PC-9 (cell line): ENCODE measurements at regions of chr20 and their contacts with region 1.

Region 1: DNA sequence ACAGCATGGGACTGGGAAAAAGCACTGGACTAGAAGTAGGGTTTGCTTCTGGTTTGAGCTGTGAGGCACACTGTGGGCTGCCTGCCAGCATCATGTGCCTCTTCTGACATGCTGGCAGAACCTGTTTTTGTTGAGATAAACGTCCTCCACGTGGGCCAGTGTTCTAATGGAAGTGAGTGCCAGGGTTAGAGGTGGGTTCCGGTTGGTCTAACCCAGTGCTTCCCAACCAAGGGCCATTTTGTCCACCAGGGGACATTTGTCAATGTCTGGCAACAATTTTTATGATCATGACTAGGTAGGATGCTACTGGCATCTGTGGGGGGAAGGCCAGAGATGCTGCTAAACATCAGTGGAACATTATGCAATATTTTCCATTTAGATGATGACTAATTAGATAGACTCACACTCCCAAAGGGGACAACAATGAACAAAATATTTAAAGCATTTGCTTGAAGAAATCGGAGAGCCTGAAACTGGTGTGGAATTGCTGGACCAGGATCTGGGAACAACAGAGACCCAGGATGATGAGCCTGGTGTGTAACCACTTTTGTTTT is 7.8 kb upstream of the APMAP start:
- DNase-seq: peak; percentile 90 to 98
- H3K4me3 ChIP-seq: no peak overlapping the region; the same call in 1 of the 2 replicates
- H3K27ac ChIP-seq: peak overlapping the region; percentile 68
- H3K4me1 ChIP-seq: peaks cover 33% of the 10 kb centered on the region
- H3K27me3 ChIP-seq: no peaks in the 10 kb centered on the region
- CTCF ChIP-seq: peak; percentile 50

Region 2: DNA sequence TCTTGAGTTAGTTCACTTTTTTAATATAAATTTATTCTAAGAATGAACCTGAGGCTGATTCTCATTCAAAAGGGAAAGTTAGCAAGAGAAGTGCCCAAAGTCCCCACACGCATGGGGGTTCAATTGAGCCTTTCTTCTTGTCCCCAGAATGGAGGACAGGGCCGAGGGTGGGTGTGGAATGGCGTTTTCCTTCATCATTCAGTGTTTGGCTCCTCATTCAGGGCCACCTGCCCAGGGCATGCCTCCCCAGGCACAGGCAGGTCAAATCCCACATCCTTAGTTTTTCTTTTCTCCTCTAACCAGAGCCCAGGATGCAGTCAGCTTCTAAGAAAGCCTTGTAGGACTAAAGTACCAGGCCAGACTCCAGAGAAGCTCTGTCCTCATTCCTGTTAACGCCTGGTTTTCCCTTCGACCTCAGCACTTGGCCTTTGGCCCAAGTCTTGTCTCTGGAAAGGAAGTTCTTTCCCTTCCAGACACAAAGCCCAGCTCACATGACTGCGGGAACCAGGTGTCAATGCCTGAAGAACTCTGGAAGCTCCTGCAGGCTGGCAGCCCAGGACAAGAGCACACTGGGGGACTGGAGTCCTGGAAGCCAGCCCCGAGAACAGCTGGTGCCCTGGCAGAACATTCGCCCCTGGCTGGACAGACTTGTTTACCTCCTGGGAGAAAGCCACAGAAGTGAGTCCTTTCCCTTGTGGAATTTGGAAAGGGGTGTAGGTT is 39.2 kb after region 1 on chr20:
- CTCF ChIA-PET with region 1: no interaction called
- POLR2A ChIA-PET with region 1: no interaction called
- intact Hi-C with region 1: loop called (anchors 2 kb)
- DNase-seq: peak; percentile 59 to 71
- H3K4me3 ChIP-seq: no peak overlapping the region
- H3K27ac ChIP-seq: no peak overlapping the region
- H3K4me1 ChIP-seq: peaks cover 11% of the 10 kb centered on the region; the same call in 1 of the 2 replicates
- H3K27me3 ChIP-seq: no peaks in the 10 kb centered on the region
- CTCF ChIP-seq: no peak

Region 3: DNA sequence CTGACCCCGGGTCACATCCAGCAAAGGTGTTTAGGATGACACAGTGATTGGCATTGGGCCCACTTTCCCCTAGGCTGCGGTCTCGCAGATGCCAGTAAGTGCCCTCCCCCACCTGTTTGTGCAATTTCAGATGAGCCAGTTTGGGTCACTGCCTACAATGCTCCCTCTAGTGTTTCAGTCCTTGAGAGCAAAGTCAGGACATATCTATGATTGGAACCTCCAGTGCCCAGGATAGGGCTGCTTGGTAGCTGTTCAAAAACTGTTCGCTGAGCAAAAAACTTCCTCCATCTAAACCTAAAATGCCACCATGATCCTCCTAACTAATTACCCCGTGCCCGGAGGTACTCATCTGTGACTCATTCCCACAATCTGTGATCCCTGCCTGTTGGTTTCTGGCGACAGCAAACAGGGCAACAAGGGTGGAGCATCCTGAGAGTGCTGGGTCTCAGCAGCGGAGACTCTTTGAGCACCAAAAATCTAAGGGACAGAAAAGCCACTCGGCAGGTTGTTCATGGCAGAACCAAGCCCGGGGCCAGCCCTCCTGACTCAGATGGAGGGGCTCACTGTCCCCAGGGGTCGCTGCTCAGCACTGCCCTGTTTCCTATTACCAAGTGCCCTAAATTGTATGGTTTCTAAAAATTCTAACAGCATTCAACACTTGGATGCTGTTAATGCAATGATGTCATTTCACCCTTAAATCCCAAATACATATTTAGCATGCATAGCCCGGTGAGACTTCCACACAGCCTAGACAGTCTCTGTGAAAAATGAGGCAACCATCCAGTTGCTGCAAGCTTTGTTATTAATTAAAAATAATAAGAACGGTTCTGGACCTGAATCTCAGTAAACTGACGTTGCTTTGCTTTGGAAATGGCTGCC is 76.6 kb after region 1 on chr20:
- CTCF ChIA-PET with region 1: no interaction called
- POLR2A ChIA-PET with region 1: no interaction called
- intact Hi-C with region 1: loop called (anchors 1 kb)
- DNase-seq: peak; percentile 93 to 95
- H3K4me3 ChIP-seq: peak overlapping the region; percentile 54; the same call in 1 of the 2 replicates
- H3K27ac ChIP-seq: peak overlapping the region; percentile 77
- H3K4me1 ChIP-seq: peaks cover 70% of the 10 kb centered on the region
- H3K27me3 ChIP-seq: no peaks in the 10 kb centered on the region
- CTCF ChIP-seq: peak; percentile 44; the same call in 1 of the 2 replicates

Region 4: DNA sequence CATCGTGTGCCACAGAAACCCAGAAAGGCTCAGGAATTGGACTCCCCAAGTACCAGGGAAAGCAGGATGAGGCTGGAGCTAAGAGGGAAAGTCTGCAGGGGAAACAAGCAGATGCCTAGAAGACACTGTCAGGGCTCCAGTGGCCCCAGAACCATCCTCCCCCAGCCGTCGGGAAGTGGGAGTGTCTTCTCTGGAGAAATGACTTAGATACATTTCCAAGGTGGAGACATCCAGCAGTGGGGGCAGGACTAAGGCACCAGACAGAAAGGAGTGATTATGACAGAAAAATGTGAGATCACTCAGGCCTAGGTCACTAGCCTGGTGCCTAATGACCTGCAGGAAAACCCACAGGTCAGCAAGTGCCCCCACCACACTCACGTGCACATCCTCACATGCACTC is 117.6 kb after region 1 on chr20:
- CTCF ChIA-PET with region 1: no interaction called
- POLR2A ChIA-PET with region 1: interaction called, 13 read pairs
- intact Hi-C with region 1: no loop called
- DNase-seq: no peak
- H3K4me3 ChIP-seq: no peak overlapping the region
- H3K27ac ChIP-seq: no peak overlapping the region
- H3K4me1 ChIP-seq: peaks cover 5% of the 10 kb centered on the region; the same call in 1 of the 2 replicates
- H3K27me3 ChIP-seq: no peaks in the 10 kb centered on the region
- CTCF ChIP-seq: no peak

Region 5: GRCh38 chr20:25136643-25137559 is 136.6 kb after region 1 on chr20:
- CTCF ChIA-PET with region 1: no interaction called
- POLR2A ChIA-PET with region 1: no interaction called
- intact Hi-C with region 1: loop called (anchors 2 kb)
- DNase-seq: peak; percentile 84 to 88
- H3K4me3 ChIP-seq: no peak overlapping the region
- H3K27ac ChIP-seq: peak overlapping the region; percentile 58
- H3K4me1 ChIP-seq: peaks cover 22% of the 10 kb centered on the region
- H3K27me3 ChIP-seq: no peaks in the 10 kb centered on the region
- CTCF ChIP-seq: no peak